ENCODE measurements at regions of chr13 and their contacts with region 1.

Region 1: GRCh38 chr13:35332134-35332533 is 144.4 kb downstream of the MAB21L1 start:
- DNase-seq: no peak
- ATAC-seq: no peak
- H3K4me3 ChIP-seq: no peak overlapping the region
- H3K27ac ChIP-seq: no peak overlapping the region
- H3K4me1 ChIP-seq: no peaks in the 10 kb centered on the region
- H3K27me3 ChIP-seq: no peaks in the 10 kb centered on the region
- CTCF ChIP-seq: no peak

Region 2: DNA sequence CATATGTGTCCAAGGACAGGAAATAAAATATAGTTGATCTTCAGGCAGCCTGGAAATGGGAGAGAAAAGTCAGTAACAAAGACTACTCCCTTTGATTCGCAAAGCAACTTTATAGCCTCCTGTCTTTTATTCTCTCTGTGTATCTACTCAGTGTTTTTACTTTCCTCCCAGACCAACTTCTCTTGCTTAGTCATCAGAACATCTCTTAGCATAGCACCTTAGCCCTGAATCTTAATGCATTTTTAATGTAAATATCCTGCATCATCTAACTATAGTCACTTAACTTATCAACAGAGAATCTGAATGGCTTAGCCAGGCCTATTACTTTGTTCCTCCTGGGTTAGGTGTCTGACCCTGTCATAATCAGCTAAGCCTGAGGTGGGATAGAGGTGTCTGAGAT is 93.9 kb before region 1 on chr13:
- intact Hi-C with region 1: no loop called
- DNase-seq: no peak
- ATAC-seq: no peak
- H3K4me3 ChIP-seq: no peak overlapping the region
- H3K27ac ChIP-seq: no peak overlapping the region
- H3K4me1 ChIP-seq: peaks cover 2% of the 10 kb centered on the region
- H3K27me3 ChIP-seq: no peaks in the 10 kb centered on the region
- CTCF ChIP-seq: no peak

Region 3: GRCh38 chr13:35309706-35310105 is 22.4 kb before region 1 on chr13:
- intact Hi-C with region 1: loop called in 1 of 2 experiments (anchors 1 kb)
- DNase-seq: no peak
- ATAC-seq: no peak
- H3K4me3 ChIP-seq: no peak overlapping the region
- H3K27ac ChIP-seq: no peak overlapping the region
- H3K4me1 ChIP-seq: no peaks in the 10 kb centered on the region
- H3K27me3 ChIP-seq: no peaks in the 10 kb centered on the region
- CTCF ChIP-seq: no peak

Region 4: DNA sequence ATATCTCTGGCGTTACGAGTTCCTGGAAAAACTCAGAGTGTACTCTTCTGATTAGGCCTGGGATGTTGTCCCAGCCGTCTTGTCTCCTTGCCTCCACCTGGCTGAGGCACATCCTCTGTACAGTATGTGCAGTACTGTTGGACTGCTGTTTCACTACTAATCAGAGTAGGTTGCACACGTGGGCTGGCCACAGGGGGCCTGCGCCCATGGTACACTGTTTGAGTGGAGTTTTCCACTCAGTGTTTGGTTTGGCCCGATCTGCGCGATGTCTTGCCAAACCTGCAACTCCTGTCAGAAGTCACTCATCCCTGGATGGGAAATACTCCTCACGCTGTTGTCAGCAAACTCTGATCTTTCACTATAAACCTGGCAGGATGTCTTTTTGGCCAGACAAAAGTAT is 1962.9 kb after region 1 on chr13:
- intact Hi-C with region 1: no loop called
- DNase-seq: peak; percentile 37 to 53
- ATAC-seq: peak in 1 of 4 donors; percentile 16
- H3K4me3 ChIP-seq: no peak overlapping the region
- H3K27ac ChIP-seq: no peak overlapping the region
- H3K4me1 ChIP-seq: no peaks in the 10 kb centered on the region
- H3K27me3 ChIP-seq: peaks cover 0 to 3% (median 0%) of the 10 kb centered on the region in 3 donors
- CTCF ChIP-seq: no peak

Measured in psoas muscle (tissue), 8 donors.